CD14-positive monocyte (primary cell): ENCODE measurements at regions of chr3 and their contacts with region 1.

Region 1: DNA sequence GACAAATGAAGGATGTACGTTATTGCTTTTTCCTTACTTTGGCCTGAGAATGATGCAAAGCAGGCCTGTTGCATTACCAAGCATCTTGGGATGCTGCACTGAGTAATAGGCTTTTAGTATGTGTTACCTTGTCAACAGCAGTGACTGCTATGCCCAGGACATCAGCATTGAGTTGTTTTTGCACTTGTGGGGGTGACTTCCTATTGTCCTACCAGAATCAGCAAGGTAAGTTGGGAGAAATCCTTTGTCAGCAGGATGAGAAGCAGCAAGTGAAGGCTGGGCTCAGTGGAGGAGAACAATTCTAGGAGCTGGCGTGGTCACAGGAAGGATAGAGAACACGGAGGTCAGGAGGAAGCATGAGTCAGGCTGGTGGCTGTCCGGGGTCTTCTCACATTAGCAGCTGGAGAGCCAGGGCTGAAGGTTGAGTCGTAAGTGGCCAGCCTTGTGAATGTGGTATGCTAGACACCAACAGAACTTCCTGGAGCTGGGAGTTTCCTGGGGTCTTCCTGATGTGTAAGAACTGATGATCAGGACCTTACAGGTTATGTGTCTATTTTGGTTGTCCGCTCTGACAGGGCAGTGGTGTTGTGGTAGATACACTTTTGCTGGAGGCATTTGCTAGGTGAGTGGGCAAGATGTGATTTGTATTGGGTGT is 142.7 kb downstream of the FNDC3B start:
- DNase-seq: peak in 2 of 3 donors; percentile 53 to 70
- H3K4me3 ChIP-seq: no peak overlapping the region
- H3K4me3 Mint-ChIP-seq: no peak overlapping the region
- H3K27ac ChIP-seq: peak overlapping the region in 1 of 2 donors; percentile 53
- H3K27ac Mint-ChIP-seq: peak overlapping the region; percentile 19 to 94 (median 66)
- H3K4me1 ChIP-seq: peaks cover 34 to 44% of the 10 kb centered on the region in 2 donors
- H3K4me1 Mint-ChIP-seq: peaks cover 63% of the 10 kb centered on the region
- H3K27me3 ChIP-seq: no peaks in the 10 kb centered on the region
- H3K27me3 Mint-ChIP-seq: no peaks in the 10 kb centered on the region
- CTCF ChIP-seq: no peak

Region 2: DNA sequence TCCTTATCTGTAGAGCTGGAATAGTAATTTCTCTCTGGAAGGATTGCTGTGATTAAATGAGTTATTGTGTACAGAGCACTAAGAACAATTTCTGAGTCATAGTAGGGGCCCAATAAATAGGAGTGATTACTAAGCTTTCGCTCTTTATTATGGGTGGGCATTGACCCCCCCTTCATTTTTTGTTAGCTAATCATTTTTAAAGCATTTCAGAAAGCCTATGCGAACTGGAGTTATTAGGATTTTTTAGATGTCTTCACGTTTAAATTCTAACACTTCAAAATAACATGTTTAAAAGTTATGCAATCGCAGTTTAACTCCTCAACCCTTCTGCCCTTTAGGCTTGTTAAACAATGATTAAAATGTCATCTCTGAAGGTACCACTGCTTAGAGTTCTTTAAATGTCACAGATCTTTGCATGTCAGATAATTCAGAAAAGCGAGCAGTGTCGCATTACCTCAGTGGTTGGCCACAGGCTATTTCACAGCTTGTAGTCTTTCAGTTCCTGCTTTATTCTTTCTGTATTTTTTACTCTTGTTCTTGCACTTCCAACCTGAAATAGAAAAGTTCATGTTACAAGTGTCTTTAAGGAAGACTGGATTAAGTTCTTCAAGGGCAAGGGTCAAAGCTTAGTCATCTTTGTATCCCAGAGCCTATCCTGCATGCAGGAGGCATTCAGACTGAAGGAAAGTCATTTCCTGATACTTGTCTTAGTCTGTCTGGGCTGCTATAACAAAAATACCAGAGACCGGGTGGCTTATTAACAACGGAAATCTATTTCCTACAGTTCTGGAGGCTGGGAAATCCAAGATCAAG is 39.8 kb before region 1 on chr3:
- intact Hi-C with region 1: loop called in 1 of 2 experiments (anchors 5 kb)
- DNase-seq: peak in 2 of 3 donors; percentile 74 to 75
- H3K4me3 ChIP-seq: no peak overlapping the region
- H3K4me3 Mint-ChIP-seq: peak overlapping the region in 1 of 2 donors; percentile 21
- H3K27ac ChIP-seq: peak overlapping the region in 1 of 2 donors; percentile 100
- H3K27ac Mint-ChIP-seq: peak overlapping the region; percentile 85 to 98 (median 94)
- H3K4me1 ChIP-seq: peaks cover 76 to 84% of the 10 kb centered on the region in 2 donors
- H3K4me1 Mint-ChIP-seq: peaks cover 82% of the 10 kb centered on the region
- H3K27me3 ChIP-seq: no peaks in the 10 kb centered on the region
- H3K27me3 Mint-ChIP-seq: no peaks in the 10 kb centered on the region
- CTCF ChIP-seq: no peak

Region 3: GRCh38 chr3:172153335-172153861 is 28.7 kb before region 1 on chr3:
- intact Hi-C with region 1: no loop called
- DNase-seq: peak; percentile 84 to 94 (median 92)
- H3K4me3 ChIP-seq: peak overlapping the region in 1 of 3 experiments; percentile 33
- H3K4me3 Mint-ChIP-seq: peak overlapping the region; percentile 55 to 76
- H3K27ac ChIP-seq: peak overlapping the region; percentile 65 to 82
- H3K27ac Mint-ChIP-seq: peak overlapping the region; percentile 90 to 96 (median 94)
- H3K4me1 ChIP-seq: peaks cover 35 to 46% of the 10 kb centered on the region in 2 donors
- H3K4me1 Mint-ChIP-seq: peaks cover 64% of the 10 kb centered on the region
- H3K27me3 ChIP-seq: no peaks in the 10 kb centered on the region
- H3K27me3 Mint-ChIP-seq: peaks cover 0 to 2% (median 0%) of the 10 kb centered on the region in 3 donors
- CTCF ChIP-seq: no peak